ENCODE measurements at regions of chr4 and their contacts with region 1.

Region 1: DNA sequence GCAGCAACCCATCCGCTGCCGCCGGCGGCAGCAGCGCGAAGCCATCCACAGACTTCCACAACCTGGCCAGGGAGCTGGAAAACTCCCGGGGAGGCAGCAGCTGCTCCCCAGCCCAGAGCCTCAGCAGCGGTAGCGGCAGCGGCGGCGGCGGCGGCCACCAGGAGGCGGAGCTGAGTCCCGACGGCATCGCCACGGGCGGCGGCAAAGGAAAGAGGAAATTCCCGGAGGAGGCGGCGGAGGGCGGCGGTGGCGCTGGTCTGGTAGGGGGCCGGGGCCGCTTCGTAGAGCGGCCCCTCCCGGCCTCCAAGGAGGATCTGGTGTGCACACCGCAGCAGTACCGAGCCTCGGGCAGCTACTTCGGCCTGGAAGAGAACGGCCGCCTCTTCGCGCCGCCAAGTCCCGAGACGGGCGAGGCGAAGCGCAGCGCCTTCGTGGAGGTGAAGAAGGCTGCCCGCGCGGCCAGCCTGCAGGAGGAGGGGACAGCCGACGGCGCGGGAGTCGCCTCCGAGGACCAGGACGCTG is 4.9 kb downstream of the PRDM8 start:
- DNase-seq: peak; percentile 80
- ATAC-seq: peak; percentile 75
- H3K4me3 ChIP-seq: peak overlapping the region; percentile 66
- H3K27ac ChIP-seq: peak overlapping the region; percentile 89
- H3K4me1 ChIP-seq: peaks cover 2% of the 10 kb centered on the region; the same call in 1 of the 2 replicates
- H3K27me3 ChIP-seq: no peaks in the 10 kb centered on the region
- CTCF ChIP-seq: peak; percentile 76
- POLR2A ChIP-seq: no peak
- RAD21 ChIP-seq: peak; percentile 56

Region 2: DNA sequence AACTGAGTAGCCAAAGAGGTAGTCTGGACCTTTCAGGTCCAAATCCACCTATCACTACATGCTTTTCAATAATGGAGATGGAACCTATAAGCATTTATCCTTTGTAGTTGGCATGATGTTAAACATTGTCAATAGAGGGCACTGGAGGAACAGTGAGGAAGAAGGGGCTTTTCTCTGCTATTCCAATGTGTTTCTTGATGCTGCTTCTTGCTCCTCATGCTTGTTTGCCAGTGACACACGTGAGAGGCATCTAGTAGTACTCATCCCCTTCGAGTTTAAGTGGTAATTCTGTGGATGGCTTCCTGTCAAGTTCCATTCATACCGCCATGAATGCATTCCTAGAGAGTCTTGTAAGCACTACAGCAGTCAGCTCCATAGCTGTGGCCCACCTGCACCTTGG is 960.4 kb before region 1 on chr4:
- CTCF ChIA-PET with region 1: no interaction called
- POLR2A ChIA-PET with region 1: no interaction called
- dilution Hi-C with region 1: no loop called
- in situ Hi-C with region 1: no loop called
- intact Hi-C with region 1: loop called (anchors 5 kb)
- DNase-seq: peak; percentile 49
- ATAC-seq: peak; percentile 94
- H3K4me3 ChIP-seq: no peak overlapping the region
- H3K27ac ChIP-seq: no peak overlapping the region
- H3K4me1 ChIP-seq: peaks cover 1% of the 10 kb centered on the region; the same call in 1 of the 2 replicates
- H3K27me3 ChIP-seq: no peaks in the 10 kb centered on the region
- CTCF ChIP-seq: no peak
- POLR2A ChIP-seq: no peak
- RAD21 ChIP-seq: no peak

Region 3: GRCh38 chr4:79576429-79576753 is 625.9 kb before region 1 on chr4:
- CTCF ChIA-PET with region 1: no interaction called
- POLR2A ChIA-PET with region 1: no interaction called
- dilution Hi-C with region 1: no loop called
- in situ Hi-C with region 1: no loop called
- intact Hi-C with region 1: loop called (anchors 10 kb)
- DNase-seq: peak; percentile 18
- ATAC-seq: peak; percentile 84
- H3K4me3 ChIP-seq: no peak overlapping the region
- H3K27ac ChIP-seq: no peak overlapping the region
- H3K4me1 ChIP-seq: no peaks in the 10 kb centered on the region
- H3K27me3 ChIP-seq: no peaks in the 10 kb centered on the region
- CTCF ChIP-seq: peak; percentile 36
- POLR2A ChIP-seq: no peak
- RAD21 ChIP-seq: peak; percentile 44

Region 4: DNA sequence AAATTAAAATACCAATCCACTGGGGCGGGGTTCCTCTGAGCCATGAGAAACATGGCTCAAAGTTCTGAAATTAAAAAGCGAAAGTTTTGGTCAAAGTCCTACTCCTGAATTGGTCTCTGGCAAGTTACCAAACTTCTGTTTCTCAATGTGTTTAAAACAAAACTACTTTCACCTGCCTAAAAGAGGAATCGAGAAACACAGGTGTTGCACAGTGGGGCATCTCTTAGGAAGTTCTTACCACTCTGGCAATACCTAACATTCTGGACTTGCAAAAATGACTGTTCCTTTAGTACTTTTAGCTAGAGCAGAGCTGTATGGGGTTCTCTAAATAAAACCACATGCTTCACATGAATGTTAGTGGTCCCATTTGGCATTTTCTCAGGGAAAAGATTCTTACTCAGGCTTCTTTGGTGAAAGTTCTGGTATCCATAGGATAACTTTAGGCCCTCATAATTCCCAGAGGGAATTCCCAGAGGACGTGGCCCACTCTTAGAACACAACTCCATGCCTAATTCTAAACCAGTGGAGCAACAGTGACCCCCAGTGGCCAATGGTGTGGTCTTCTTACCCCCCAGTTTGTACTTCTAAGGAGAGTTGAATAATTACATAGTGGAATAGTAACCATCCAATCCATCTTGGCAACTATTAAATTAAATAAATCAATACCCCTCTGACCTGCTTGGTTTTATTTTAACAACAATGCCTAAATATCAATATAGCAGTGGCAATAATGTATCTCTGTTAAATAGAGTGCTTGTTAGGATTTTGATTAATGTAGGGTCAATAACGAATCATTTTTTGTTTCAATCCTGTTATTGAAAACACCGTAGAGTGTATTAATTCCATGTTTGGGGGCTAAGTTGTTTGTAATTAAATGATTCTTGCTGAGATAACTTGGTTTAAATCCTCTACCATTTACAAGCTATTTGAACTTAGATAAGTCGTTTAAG is 850.1 kb after region 1 on chr4:
- CTCF ChIA-PET with region 1: interaction called, 3 read pairs
- POLR2A ChIA-PET with region 1: no interaction called
- dilution Hi-C with region 1: no loop called
- in situ Hi-C with region 1: no loop called
- intact Hi-C with region 1: loop called (anchors 5 kb)
- DNase-seq: peak; percentile 74
- ATAC-seq: peak; percentile 98
- H3K4me3 ChIP-seq: no peak overlapping the region
- H3K27ac ChIP-seq: no peak overlapping the region
- H3K4me1 ChIP-seq: no peaks in the 10 kb centered on the region; the same call in 1 of the 2 replicates
- H3K27me3 ChIP-seq: peaks cover 7% of the 10 kb centered on the region
- CTCF ChIP-seq: peak; percentile 75
- POLR2A ChIP-seq: no peak
- RAD21 ChIP-seq: peak; percentile 80